Activated CD4-positive, alpha-beta T cell treated with anti-CD3 and anti-CD28 coated beads for 36 hours (primary cell): ENCODE measurements at regions of chr2 and their contacts with region 1.

Region 1: DNA sequence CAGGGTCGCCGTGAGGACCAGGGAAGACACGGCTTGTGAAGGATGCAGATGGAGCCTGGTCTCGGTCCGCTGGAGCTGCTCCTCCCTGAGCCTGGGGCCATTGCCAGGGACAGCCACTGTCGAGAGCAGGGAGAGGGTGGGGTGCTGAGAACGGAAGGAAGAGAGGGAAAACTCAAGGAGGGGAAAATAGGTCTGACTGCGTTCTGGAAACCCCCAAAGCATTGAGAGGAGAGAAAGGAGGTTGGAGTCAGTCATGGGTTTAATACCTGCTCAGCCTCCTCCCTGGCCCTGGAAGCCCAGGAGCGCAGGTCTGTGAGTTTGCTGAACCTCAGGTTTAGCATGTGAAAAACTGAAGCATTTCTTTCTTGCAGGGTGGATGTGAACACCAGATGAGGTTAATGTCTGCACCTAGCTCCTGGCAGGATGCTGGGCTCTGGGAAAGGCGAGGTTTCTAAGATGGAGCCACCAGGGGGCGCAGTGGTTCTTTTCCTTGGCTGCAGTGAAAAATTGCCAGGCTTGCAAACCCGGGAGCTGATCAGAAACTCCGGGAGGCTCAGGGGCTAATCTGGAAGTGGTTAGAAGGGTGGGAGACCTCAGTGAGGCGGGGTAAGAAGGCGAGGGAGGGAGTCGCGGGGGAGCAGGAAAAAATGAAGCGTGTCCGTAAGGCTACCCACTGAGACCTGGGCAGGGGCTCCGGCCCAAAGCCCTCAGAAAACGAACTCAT is 33.6 kb upstream of the RNF149 start:
- DNase-seq: peak; percentile 85
- ATAC-seq: peak; percentile 74
- H3K4me3 Mint-ChIP-seq: no peak overlapping the region
- H3K27ac Mint-ChIP-seq: no peak overlapping the region
- H3K4me1 Mint-ChIP-seq: peaks cover 18% of the 10 kb centered on the region
- H3K27me3 Mint-ChIP-seq: no peaks in the 10 kb centered on the region

Region 2: GRCh38 chr2:101328474-101329007 is 13.5 kb before region 1 on chr2:
- CTCF ChIA-PET with region 1: interaction called, 66 read pairs
- POLR2A ChIA-PET with region 1: no interaction called
- intact Hi-C with region 1: no loop called
- DNase-seq: no peak
- ATAC-seq: peak; percentile 80
- H3K4me3 Mint-ChIP-seq: no peak overlapping the region
- H3K27ac Mint-ChIP-seq: no peak overlapping the region
- H3K4me1 Mint-ChIP-seq: peaks cover 20% of the 10 kb centered on the region
- H3K27me3 Mint-ChIP-seq: no peaks in the 10 kb centered on the region

Region 3: GRCh38 chr2:101361121-101361870 is 19.2 kb after region 1 on chr2:
- CTCF ChIA-PET with region 1: interaction called, 11 read pairs
- POLR2A ChIA-PET with region 1: no interaction called
- intact Hi-C with region 1: no loop called
- DNase-seq: peak; percentile 32
- ATAC-seq: peak; percentile 74
- H3K4me3 Mint-ChIP-seq: no peak overlapping the region
- H3K27ac Mint-ChIP-seq: peak overlapping the region; percentile 39
- H3K4me1 Mint-ChIP-seq: peaks cover 25% of the 10 kb centered on the region
- H3K27me3 Mint-ChIP-seq: no peaks in the 10 kb centered on the region

Region 4: DNA sequence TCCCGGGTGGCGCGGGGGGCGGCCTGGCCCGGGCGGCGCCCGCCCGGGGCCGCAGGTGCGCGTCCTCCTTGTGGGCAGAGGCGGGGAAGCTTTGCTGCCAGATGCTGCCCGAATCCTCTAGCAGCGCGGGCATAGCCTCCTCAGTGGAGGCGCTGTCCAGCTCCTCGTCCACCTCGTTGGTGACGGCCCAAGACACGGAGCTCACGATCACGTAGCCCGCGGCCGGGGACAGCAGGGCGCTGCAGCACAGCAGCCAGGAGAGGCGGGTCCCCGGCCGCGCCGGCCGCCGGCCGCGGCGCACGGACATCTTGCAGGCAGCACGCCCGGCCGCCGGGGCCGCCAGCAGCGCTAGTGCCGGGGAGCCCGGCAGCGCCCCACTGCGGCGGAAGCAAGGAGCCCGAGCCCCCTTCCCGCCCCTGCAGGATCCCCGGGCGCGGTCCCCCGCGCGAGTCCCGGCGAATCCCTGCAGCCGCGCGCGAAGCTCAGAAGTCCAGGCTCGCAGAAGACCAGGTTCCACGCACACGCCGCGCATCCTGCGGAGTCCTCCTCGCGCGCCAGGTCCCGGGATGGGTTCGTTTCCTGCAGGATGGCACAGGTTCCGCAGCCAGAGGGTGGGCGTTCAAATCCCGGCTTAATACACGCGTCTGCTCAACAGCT is 45.2 kb after region 1 on chr2 and contains the start of gene CREG2:
- CTCF ChIA-PET with region 1: interaction called, 23 read pairs
- POLR2A ChIA-PET with region 1: no interaction called
- intact Hi-C with region 1: loop called (anchors 1 to 5 kb)
- DNase-seq: peak; percentile 81
- ATAC-seq: peak; percentile 93
- H3K4me3 Mint-ChIP-seq: peak within 1 kb of the TSS; percentile 55
- H3K27ac Mint-ChIP-seq: no peak within 1 kb of the TSS
- H3K4me1 Mint-ChIP-seq: peaks cover 6% of the 10 kb centered on the region
- H3K27me3 Mint-ChIP-seq: peaks cover 34% of the 10 kb centered on the region
- total RNA-seq, gene CREG2: not detected

Region 5: DNA sequence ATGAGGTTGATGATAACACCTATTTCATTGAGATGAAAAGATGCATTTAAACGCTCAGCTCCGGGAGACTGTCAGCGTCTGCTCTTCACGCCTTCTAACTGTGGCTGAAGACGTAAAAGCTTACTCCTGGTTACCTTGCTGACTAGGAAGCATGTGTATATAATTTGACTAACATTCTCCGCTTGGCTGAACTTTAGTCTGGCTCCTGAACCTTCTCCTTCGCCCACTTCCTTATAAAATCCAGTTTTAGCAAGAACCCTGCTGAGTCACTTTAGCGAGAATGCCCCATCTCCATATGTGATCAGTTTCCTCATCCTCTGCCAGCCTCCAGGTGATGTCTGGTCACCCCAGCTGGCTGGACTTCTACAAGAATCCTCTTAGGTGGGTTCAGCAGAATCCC is 58.0 kb after region 1 on chr2:
- CTCF ChIA-PET with region 1: interaction called, 12 read pairs
- POLR2A ChIA-PET with region 1: no interaction called
- intact Hi-C with region 1: no loop called
- DNase-seq: no peak
- ATAC-seq: no peak
- H3K4me3 Mint-ChIP-seq: no peak overlapping the region
- H3K27ac Mint-ChIP-seq: no peak overlapping the region
- H3K4me1 Mint-ChIP-seq: peaks cover 13% of the 10 kb centered on the region
- H3K27me3 Mint-ChIP-seq: peaks cover 13% of the 10 kb centered on the region

Region 6: GRCh38 chr2:101831351-101831865 is 489.3 kb after region 1 on chr2:
- CTCF ChIA-PET with region 1: interaction called, 14 read pairs
- POLR2A ChIA-PET with region 1: no interaction called
- intact Hi-C with region 1: loop called in 1 of 2 experiments (anchors 5 kb)
- DNase-seq: peak; percentile 79
- ATAC-seq: peak; percentile 56
- H3K4me3 Mint-ChIP-seq: no peak overlapping the region
- H3K27ac Mint-ChIP-seq: peak overlapping the region; percentile 78
- H3K4me1 Mint-ChIP-seq: peaks cover 56% of the 10 kb centered on the region
- H3K27me3 Mint-ChIP-seq: no peaks in the 10 kb centered on the region

Region 7: GRCh38 chr2:101983928-101984327 is 641.9 kb after region 1 on chr2:
- CTCF ChIA-PET with region 1: no interaction called
- POLR2A ChIA-PET with region 1: no interaction called
- intact Hi-C with region 1: loop called in 1 of 2 experiments (anchors 10 kb)
- DNase-seq: no peak
- ATAC-seq: no peak
- H3K4me3 Mint-ChIP-seq: no peak overlapping the region
- H3K27ac Mint-ChIP-seq: no peak overlapping the region
- H3K4me1 Mint-ChIP-seq: peaks cover 16% of the 10 kb centered on the region
- H3K27me3 Mint-ChIP-seq: no peaks in the 10 kb centered on the region